Spleen (tissue), 13 donors: ENCODE measurements at regions of chr12 and their contacts with region 1.

Region 1: DNA sequence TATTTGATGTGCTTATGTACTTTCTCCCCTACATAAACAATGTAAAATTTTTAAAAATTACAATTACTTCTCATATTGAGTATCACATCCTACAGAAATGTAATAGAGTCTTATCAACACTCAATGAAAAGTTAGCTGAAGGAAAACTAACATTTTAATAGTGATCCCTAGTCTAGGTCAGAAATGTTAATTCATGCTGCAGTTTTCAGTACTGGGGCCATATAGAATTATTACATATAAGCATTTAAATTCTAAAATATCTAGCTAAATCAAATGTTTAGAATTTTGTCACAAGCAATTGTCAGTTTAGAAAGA is 37.8 kb downstream of the SLC6A15 start:
- DNase-seq: no peak
- H3K4me3 ChIP-seq: no peak overlapping the region
- H3K27ac ChIP-seq: no peak overlapping the region
- H3K4me1 ChIP-seq: no peaks in the 10 kb centered on the region
- H3K27me3 ChIP-seq: no peaks in the 10 kb centered on the region
- CTCF ChIP-seq: peak in 2 of 11 experiments; percentile 2 to 3
- POLR2A ChIP-seq: no peak

Region 2: DNA sequence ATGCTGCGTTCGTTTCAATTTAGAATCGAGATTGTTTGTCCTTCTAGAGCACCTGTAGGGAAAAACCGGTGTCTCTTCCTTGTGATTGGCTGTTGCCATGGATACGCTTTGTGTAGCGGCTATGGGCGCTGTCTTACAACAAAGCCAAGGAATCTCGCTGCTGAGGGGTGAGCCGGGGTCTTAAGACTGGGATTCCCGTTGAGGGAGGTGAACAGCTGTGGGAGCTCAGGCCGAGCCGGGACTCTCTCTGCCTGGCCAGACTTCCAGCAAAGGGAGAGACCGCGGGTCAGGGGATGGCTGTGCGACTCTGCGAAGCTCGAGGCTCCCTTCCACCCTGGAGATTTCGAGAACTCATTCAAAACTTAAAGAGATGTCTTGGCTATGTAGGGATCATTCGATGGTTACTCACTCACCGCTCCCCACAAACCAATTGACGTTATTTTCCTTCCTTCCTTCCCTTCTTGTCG is 161.5 kb after region 1 on chr12 and contains the starts of genes LRRIQ1 and TSPAN19:
- intact Hi-C with region 1: loop called (anchors 5 kb)
- DNase-seq: peak; percentile 67
- H3K4me3 ChIP-seq: peak within 1 kb of the TSS; percentile 29 to 71 (median 40)
- H3K27ac ChIP-seq: no peak within 1 kb of the TSS
- H3K4me1 ChIP-seq: peaks cover 0 to 12% (median 0%) of the 10 kb centered on the region in 6 donors
- H3K27me3 ChIP-seq: peaks cover 0 to 26% (median 0%) of the 10 kb centered on the region in 7 donors
- CTCF ChIP-seq: no peak
- POLR2A ChIP-seq: no peak
- total RNA-seq, gene LRRIQ1: 0.14 to 1.0 (median 0.40) TPM in 6 of 7 donors, not detected in the other
- total RNA-seq, gene TSPAN19: 0.32 to 1.1 (median 0.77) TPM in 3 of 7 donors, not detected in the others